ENCODE measurements at regions of chr1 and their contacts with region 1.

Region 1: GRCh38 chr1:156054500-156055280 is at the start of gene LAMTOR2:
- DNase-seq: peak; percentile 96
- H3K4me3 ChIP-seq: peak within 1 kb of the TSS; percentile 94 to 98 (median 98)
- H3K27ac ChIP-seq: peak within 1 kb of the TSS; percentile 73
- H3K4me1 ChIP-seq: peaks cover 6% of the 10 kb centered on the region
- H3K27me3 ChIP-seq: no peaks in the 10 kb centered on the region
- CTCF ChIP-seq: no peak
- total RNA-seq, gene LAMTOR2: 43.7 to 71.3 TPM

Region 2: GRCh38 chr1:155759966-155760630 is 294.6 kb before region 1 on chr1:
- CTCF ChIA-PET with region 1: no interaction called
- dilution Hi-C with region 1: no loop called
- in situ Hi-C with region 1: no loop called
- intact Hi-C with region 1: loop called (anchors 10 kb)
- DNase-seq: peak; percentile 72
- H3K4me3 ChIP-seq: no peak overlapping the region
- H3K27ac ChIP-seq: peak overlapping the region; percentile 71
- H3K4me1 ChIP-seq: peaks cover 31% of the 10 kb centered on the region
- H3K27me3 ChIP-seq: no peaks in the 10 kb centered on the region
- CTCF ChIP-seq: no peak

Region 3: GRCh38 chr1:155884031-155884960 is 170.4 kb before region 1 on chr1:
- CTCF ChIA-PET with region 1: no interaction called
- dilution Hi-C with region 1: no loop called
- in situ Hi-C with region 1: no loop called
- intact Hi-C with region 1: no loop called
- DNase-seq: peak; percentile 23
- H3K4me3 ChIP-seq: no peak overlapping the region
- H3K27ac ChIP-seq: no peak overlapping the region
- H3K4me1 ChIP-seq: peaks cover 5% of the 10 kb centered on the region
- H3K27me3 ChIP-seq: no peaks in the 10 kb centered on the region
- CTCF ChIP-seq: no peak

Region 4: GRCh38 chr1:155940531-155940992 is 114.1 kb before region 1 on chr1:
- CTCF ChIA-PET with region 1: no interaction called
- dilution Hi-C with region 1: loop called (anchors 5 kb)
- in situ Hi-C with region 1: loop called in 1 of 2 experiments (anchors 10 kb)
- intact Hi-C with region 1: no loop called
- DNase-seq: peak; percentile 51
- H3K4me3 ChIP-seq: no peak overlapping the region
- H3K27ac ChIP-seq: peak overlapping the region; percentile 52
- H3K4me1 ChIP-seq: peaks cover 40% of the 10 kb centered on the region
- H3K27me3 ChIP-seq: no peaks in the 10 kb centered on the region
- CTCF ChIP-seq: no peak

Region 5: DNA sequence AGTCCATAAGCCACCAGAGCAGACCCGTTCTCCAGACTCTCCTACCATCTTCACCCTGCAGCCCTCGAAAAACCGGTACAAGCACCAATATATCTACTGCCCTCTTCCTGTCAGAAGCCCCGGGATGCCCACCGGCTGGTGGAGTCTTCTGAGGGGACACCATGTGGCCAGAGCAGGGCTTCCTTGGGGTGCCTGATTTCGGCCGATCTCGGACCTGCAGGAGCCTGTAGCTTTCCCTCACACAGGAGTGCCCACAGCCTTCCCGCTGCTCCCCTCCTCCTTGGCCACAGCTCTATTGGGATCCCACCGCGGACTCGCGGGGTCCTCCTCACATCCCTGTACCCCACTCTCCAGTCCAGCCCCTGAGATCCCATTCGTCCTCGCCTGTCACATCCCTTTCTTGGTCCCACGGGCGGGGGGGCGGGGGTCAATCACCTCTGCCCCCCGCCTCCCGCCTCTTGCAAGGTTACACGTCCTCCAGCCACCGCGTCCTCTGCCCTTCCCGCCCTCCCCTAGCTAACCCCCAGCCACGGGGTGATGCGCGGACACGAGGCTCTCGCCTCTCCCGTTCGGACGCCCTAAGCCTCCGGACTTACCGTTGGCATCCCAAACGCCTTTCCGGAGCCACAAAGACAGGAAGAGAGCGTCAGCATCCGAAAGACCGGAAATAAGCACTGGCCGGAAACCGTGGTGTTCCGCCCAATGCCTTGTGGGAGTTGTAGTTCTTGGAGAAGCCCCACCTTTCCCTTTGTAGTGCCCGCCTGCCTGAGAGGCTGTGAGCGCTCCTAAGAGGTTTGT is 34.2 kb before region 1 on chr1 and contains the start of gene SSR2:
- CTCF ChIA-PET with region 1: no interaction called
- dilution Hi-C with region 1: no loop called
- in situ Hi-C with region 1: no loop called
- intact Hi-C with region 1: loop called (anchors 2 kb)
- DNase-seq: peak; percentile 90
- H3K4me3 ChIP-seq: peak within 1 kb of the TSS; percentile 40 to 91 (median 69)
- H3K27ac ChIP-seq: peak within 1 kb of the TSS; percentile 14
- H3K4me1 ChIP-seq: peaks cover 14% of the 10 kb centered on the region
- H3K27me3 ChIP-seq: no peaks in the 10 kb centered on the region
- CTCF ChIP-seq: no peak
- total RNA-seq, gene SSR2: 158 to 195 TPM

Region 6: GRCh38 chr1:156136970-156137483 is 82.3 kb after region 1 on chr1:
- CTCF ChIA-PET with region 1: no interaction called
- dilution Hi-C with region 1: loop called (anchors 5 kb)
- in situ Hi-C with region 1: no loop called
- intact Hi-C with region 1: no loop called
- DNase-seq: no peak
- H3K4me3 ChIP-seq: no peak overlapping the region
- H3K27ac ChIP-seq: no peak overlapping the region
- H3K4me1 ChIP-seq: no peaks in the 10 kb centered on the region
- H3K27me3 ChIP-seq: no peaks in the 10 kb centered on the region
- CTCF ChIP-seq: peak in 1 of 2 donors; percentile 6

Measured in mammary epithelial cell (primary cell).